HCT116 (cell line): ENCODE measurements at regions of chr15 and their contacts with region 1.

Region 1: GRCh38 chr15:74373731-74374647 is 6.5 kb upstream of the CYP11A1 start:
- DNase-seq: peak; percentile 82
- ATAC-seq: peak; percentile 93
- H3K4me3 ChIP-seq: peak overlapping the region; percentile 54 to 56
- H3K27ac ChIP-seq: peak overlapping the region; percentile 57
- H3K4me1 ChIP-seq: peaks cover 10 to 24% of the 10 kb centered on the region in 2 experiments; a peak in 3 of 4 replicates
- H3K27me3 ChIP-seq: peaks cover 14% of the 10 kb centered on the region
- CTCF ChIP-seq: peak in 2 of 3 experiments; percentile 88 to 89; a peak in 4 of 6 replicates
- POLR2A ChIP-seq: peak; percentile 47
- RAD21 ChIP-seq: no peak

Region 2: DNA sequence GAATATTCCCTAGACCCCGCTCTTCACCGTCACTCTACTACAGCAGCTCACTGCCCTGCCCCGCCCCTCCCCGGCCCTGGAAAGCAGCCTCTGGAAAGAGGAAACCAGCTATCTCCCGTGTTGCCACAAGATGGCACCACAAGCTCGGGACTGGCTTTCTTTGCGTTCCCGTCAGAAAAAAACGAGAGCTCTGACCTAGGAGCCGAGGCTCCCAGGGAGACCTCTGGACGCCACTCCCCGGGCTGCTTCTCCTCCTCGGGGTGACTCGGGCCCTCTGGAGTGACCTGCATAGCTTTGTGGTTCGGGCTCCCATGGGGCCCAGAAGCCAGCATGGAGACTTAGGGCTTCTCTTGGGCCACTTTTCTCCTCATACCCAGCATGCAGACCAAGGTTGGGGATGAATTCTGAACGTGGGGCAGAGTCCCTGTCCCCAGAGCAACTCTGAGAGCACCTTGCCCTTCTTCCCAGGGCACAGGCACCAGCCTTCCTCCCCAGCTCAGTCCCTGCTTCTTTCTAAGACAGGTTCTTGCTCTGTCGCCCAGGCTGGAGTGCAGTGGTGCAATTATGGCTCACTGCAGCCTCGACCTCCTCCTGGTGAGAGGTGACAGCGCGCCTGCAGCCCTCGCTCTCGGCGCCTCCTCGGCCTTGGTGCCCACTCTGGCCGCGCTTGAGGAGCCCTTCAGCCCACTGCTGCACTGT is 400.9 kb before region 1 on chr15:
- CTCF ChIA-PET with region 1: no interaction called
- POLR2A ChIA-PET with region 1: no interaction called
- RAD21 ChIA-PET with region 1: no interaction called
- intact Hi-C with region 1: no loop called
- DNase-seq: no peak
- ATAC-seq: peak; percentile 95
- H3K4me3 ChIP-seq: peak overlapping the region; percentile 17 to 52; a peak in 3 of 4 replicates
- H3K27ac ChIP-seq: no peak overlapping the region; the same call in 1 of the 2 replicates
- H3K4me1 ChIP-seq: peaks cover 0 to 8% of the 10 kb centered on the region in 2 experiments; a peak in 2 of 4 replicates
- H3K27me3 ChIP-seq: no peaks in the 10 kb centered on the region
- CTCF ChIP-seq: peak; percentile 87 to 93 (median 87)
- POLR2A ChIP-seq: no peak
- RAD21 ChIP-seq: peak; percentile 98

Region 3: GRCh38 chr15:74433592-74434262 is 59.7 kb after region 1 on chr15 and contains the start of gene SEMA7A:
- CTCF ChIA-PET with region 1: interaction called, 83 read pairs
- POLR2A ChIA-PET with region 1: no interaction called
- RAD21 ChIA-PET with region 1: interaction called in 1 of 2 experiments, 4 read pairs
- intact Hi-C with region 1: loop called (anchors 2 kb)
- DNase-seq: peak; percentile 34
- ATAC-seq: peak; percentile 86
- H3K4me3 ChIP-seq: peak within 1 kb of the TSS; percentile 57 to 90
- H3K27ac ChIP-seq: peak within 1 kb of the TSS; percentile 87
- H3K4me1 ChIP-seq: peaks cover 16 to 54% of the 10 kb centered on the region in 2 experiments
- H3K27me3 ChIP-seq: no peaks in the 10 kb centered on the region
- CTCF ChIP-seq: no peak
- POLR2A ChIP-seq: peak; percentile 88
- RAD21 ChIP-seq: no peak
- total RNA-seq, gene SEMA7A: 13.8 TPM

Region 4: GRCh38 chr15:74489518-74490338 is 115.7 kb after region 1 on chr15:
- CTCF ChIA-PET with region 1: interaction called, 4 read pairs
- POLR2A ChIA-PET with region 1: no interaction called
- RAD21 ChIA-PET with region 1: no interaction called
- intact Hi-C with region 1: loop called (anchors 1 kb)
- DNase-seq: peak; percentile 48
- ATAC-seq: peak; percentile 94
- H3K4me3 ChIP-seq: peak overlapping the region; percentile 19 to 38
- H3K27ac ChIP-seq: no peak overlapping the region
- H3K4me1 ChIP-seq: peaks cover 0 to 11% of the 10 kb centered on the region in 2 experiments; a peak in 2 of 4 replicates
- H3K27me3 ChIP-seq: no peaks in the 10 kb centered on the region
- CTCF ChIP-seq: peak; percentile 19 to 78 (median 77); a peak in 5 of 6 replicates
- POLR2A ChIP-seq: no peak
- RAD21 ChIP-seq: peak; percentile 66

Region 5: DNA sequence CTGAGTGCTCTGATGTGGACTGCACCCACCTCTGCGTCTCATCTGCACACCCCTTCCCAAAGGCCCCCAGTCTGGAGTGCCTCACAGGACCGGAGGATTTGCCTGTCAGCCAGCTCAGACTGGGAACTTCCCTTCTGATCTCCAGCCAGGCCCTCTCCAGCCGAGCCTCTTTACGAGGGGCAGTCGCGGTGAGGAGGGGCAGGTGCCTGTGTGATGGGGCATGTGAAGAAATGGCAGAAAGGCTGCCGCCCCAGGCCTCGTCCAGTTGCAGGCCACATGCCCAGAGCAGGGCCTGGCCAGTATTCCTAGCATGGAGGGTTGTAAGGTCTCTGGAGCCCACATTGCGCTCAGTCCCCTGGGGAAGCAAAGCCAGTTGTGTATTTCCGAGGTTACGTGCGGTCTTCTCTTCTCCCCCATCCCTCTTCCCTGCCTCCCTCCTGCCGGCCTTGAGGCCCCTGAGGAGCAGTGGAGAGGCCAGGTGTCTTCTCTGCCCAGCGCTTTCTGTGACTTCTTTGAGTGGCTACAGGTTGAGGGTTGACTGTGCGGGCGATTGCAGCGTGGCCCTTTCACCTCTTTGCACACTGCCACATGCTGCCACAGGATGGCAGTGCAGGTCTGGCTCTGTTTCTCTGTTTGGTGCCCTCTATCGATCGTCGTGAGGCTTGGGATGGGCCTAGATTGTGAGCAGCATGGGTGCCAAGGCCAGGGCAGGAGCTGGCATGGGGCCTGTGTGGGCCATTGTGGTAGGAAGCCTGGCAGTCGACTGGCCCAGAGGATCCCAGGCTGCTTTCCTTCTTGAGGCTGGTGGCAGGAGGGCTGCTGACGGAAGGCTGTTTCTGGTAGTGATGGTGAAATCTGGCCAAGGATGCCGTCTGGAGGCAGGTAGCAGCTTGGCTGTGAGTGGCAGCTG is 246.9 kb after region 1 on chr15:
- CTCF ChIA-PET with region 1: interaction called, 16 read pairs
- POLR2A ChIA-PET with region 1: no interaction called
- RAD21 ChIA-PET with region 1: no interaction called
- intact Hi-C with region 1: loop called (anchors 1 kb)
- DNase-seq: peak; percentile 77
- ATAC-seq: peak; percentile 90
- H3K4me3 ChIP-seq: no peak overlapping the region
- H3K27ac ChIP-seq: no peak overlapping the region; the same call in 1 of the 2 replicates
- H3K4me1 ChIP-seq: peaks cover 5 to 22% of the 10 kb centered on the region in 2 experiments; a peak in 3 of 4 replicates
- H3K27me3 ChIP-seq: no peaks in the 10 kb centered on the region
- CTCF ChIP-seq: peak in 2 of 3 experiments; percentile 99; a peak in 4 of 6 replicates
- POLR2A ChIP-seq: no peak
- RAD21 ChIP-seq: no peak

Region 6: DNA sequence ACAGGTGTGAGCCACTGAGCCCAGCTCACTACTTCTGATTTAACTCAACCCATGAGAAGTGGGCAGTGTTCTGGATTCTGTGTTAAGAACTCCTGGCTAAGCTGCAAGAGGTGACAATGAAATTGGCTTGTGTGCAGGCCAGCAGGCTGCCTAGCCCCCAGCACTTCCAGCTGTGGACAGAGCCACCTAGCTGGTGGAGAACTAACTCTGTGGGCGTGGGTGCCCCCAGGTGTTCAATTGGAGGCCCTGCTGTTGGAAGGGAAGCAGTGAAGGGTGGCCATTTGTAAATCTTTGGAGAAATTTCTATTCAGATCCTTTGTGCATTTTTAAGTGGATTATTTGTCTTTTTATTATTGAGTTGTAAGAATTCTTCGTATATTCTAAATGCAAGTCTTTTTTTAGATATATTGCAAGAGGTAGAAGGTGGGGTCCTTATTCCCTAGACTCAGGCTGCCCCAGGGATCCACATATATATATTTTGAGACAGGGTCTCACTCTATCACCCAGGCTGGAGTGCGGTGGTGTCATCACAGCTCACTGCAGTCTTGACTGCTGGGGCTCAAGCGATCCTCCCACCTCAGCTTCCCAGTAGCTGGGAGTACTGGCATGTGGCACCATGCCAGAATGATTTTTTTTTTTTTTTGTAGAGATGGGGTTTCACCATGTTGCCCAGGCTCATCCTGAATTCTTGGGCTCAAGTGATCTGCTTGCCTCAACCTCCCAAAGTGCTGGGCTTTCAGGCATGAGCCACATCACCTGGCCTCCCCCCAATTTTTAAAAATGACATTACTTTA is 614.2 kb after region 1 on chr15:
- CTCF ChIA-PET with region 1: no interaction called
- POLR2A ChIA-PET with region 1: no interaction called
- RAD21 ChIA-PET with region 1: no interaction called
- intact Hi-C with region 1: loop called (anchors 10 kb)
- DNase-seq: peak; percentile 41
- ATAC-seq: peak; percentile 99
- H3K4me3 ChIP-seq: no peak overlapping the region
- H3K27ac ChIP-seq: no peak overlapping the region
- H3K4me1 ChIP-seq: peaks cover 10 to 11% of the 10 kb centered on the region in 2 experiments
- H3K27me3 ChIP-seq: 0 out of 2 replicates have a peak, but pooled peaks cover 4% of the 10 kb centered on the region
- CTCF ChIP-seq: peak; percentile 82 to 88 (median 85)
- POLR2A ChIP-seq: no peak
- RAD21 ChIP-seq: peak; percentile 89